Pancreas (tissue), 10 donors: ENCODE measurements at regions of chr11 and their contacts with region 1.

Region 1: DNA sequence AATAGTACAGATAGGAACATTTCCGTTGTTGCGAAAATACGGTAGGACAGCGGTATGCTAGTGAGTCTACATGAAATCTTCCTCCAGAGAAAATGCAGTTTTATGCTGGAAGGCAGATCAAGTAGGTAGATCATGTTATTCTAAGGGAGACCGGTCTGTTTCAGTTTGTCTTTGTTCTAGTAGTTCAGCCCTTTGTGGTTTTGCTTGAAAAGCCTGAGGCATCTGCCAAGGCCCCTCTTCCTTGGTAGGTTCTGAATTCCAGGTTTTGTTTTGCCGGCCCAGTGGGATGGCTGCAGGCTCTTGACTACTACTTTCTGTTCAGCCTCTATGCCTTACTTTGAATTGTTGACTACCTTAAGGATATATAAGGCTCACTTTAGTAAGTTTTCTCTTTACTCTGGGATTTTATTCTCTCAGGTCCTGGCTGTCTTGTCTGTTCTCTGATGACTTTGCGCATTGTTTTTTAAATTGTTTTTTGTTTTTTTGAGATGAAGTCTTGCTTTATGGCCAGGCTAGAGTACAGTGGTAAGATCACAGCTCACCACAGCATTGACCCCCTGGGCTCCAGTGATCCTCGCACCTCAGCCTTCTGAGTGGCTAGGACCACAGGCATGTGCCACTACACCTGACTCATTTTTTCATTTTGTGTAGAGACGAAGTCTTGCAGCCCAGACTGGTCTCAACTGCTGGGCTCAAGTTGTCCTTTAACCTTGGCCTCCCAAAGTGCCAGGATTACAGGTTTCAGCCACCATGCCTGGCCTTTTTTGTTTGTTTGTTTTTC is 53.7 kb downstream of the HIPK3 start:
- DNase-seq: no peak
- ATAC-seq: no peak
- H3K4me3 ChIP-seq: no peak overlapping the region
- H3K27ac ChIP-seq: no peak overlapping the region
- H3K4me1 ChIP-seq: peaks cover 0 to 11% (median 4%) of the 10 kb centered on the region in 3 donors
- H3K27me3 ChIP-seq: no peaks in the 10 kb centered on the region
- CTCF ChIP-seq: no peak

Region 2: DNA sequence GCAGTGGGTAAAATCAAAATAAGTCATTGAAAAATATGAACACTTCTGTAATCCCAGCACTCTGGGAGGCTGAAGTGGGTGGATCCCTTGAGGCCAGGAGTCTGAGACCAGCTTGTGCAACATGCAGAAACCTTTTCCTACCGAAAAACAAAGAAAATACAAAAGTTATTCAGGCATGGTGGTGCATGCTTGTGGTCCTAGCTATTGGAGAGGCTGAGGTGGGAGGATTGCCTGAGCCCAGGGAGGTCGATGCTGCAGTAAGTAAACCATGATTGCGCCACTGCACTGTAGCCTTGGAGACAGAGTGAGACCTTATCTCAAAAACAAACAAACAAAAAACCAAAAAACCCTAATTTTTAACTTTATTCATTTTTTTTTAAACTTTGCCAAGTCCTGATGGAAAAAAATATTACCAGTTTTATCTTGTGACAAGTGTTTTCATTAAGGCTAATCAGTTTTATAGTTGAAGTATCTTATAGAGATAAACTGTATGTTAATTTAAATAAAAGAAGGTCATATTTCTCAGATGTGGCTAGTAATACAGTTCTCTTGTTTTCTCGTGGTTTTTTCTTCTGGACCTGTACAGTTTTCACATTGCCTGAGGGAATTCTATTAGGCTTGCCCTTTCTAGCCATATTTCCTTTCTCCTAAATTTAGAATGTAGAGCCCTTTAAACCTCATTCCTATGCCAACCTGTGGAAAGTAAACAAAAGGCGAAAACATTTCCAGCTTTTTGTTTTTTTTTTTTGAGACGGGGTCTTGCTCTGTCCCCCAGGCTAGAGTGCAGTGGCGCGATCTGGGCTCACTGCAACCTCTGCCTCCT is 44.3 kb before region 1 on chr11:
- intact Hi-C with region 1: loop called in 1 of 3 experiments (anchors 10 kb)
- DNase-seq: peak in 1 of 6 donors; percentile 18
- ATAC-seq: peak; percentile 75 to 80 (median 78)
- H3K4me3 ChIP-seq: no peak overlapping the region
- H3K27ac ChIP-seq: no peak overlapping the region
- H3K4me1 ChIP-seq: peaks cover 34 to 66% (median 44%) of the 10 kb centered on the region in 3 donors
- H3K27me3 ChIP-seq: no peaks in the 10 kb centered on the region
- CTCF ChIP-seq: no peak

Region 3: GRCh38 chr11:33490842-33491370 is 180.0 kb after region 1 on chr11:
- intact Hi-C with region 1: no loop called
- DNase-seq: no peak
- ATAC-seq: no peak
- H3K4me3 ChIP-seq: no peak overlapping the region
- H3K27ac ChIP-seq: no peak overlapping the region
- H3K4me1 ChIP-seq: no peaks in the 10 kb centered on the region
- H3K27me3 ChIP-seq: no peaks in the 10 kb centered on the region
- CTCF ChIP-seq: no peak